ENCODE measurements at regions of chr19 and their contacts with region 1.

Region 1: DNA sequence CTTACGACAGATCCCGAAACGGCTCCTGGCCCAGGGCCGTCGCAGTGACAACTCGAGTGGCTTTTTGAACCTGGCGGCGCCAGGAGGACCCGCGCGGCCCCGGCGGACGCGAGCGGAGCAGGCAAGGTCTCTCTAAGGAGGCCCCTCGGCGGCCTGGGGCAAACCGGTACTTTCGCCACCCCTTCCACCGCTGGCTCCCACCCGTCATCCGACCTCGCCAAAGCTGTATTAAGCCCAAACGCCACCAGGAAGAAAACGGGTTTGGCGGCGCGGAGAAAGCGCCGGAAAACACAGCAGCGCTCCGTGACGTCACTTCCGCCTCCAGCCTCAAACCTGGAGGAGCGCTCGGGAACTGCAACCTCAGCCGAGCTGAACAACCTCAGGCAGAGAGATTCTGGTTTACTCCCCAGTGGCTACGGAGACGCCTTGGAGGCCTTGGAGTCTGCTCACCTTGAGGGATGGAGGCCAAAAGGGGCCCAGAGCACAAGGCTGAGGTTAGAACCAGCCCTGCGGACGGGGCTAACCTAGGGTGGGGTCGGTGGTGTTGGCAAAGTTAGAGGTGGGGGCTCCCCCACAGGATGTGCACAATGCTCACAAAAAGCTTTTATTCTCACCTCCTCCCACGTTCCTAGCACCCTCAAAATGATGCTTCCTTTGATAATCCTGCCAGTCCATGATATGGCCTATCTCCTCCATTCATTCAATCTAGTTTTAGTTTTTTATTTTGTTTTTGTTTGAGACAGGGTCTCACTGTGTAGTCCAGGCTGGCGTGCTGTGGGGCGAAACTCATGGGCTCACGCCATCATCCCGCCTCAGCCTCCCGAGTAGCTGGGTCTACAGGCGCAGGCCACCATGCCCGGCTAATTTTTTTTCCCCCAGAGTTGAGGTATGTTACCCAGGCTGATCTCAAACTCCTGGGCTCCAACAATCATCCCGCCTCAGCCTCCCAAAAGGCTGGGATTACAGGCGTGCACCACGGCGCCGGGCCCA is at the start of gene ZNF266:
- DNase-seq: peak; percentile 94
- H3K4me3 Mint-ChIP-seq: peak within 1 kb of the TSS; percentile 93
- H3K27ac Mint-ChIP-seq: peak within 1 kb of the TSS; percentile 96
- H3K4me1 Mint-ChIP-seq: peaks cover 34% of the 10 kb centered on the region
- H3K27me3 Mint-ChIP-seq: no peaks in the 10 kb centered on the region
- total RNA-seq, gene ZNF266: 31.3 to 32.1 TPM

Region 2: DNA sequence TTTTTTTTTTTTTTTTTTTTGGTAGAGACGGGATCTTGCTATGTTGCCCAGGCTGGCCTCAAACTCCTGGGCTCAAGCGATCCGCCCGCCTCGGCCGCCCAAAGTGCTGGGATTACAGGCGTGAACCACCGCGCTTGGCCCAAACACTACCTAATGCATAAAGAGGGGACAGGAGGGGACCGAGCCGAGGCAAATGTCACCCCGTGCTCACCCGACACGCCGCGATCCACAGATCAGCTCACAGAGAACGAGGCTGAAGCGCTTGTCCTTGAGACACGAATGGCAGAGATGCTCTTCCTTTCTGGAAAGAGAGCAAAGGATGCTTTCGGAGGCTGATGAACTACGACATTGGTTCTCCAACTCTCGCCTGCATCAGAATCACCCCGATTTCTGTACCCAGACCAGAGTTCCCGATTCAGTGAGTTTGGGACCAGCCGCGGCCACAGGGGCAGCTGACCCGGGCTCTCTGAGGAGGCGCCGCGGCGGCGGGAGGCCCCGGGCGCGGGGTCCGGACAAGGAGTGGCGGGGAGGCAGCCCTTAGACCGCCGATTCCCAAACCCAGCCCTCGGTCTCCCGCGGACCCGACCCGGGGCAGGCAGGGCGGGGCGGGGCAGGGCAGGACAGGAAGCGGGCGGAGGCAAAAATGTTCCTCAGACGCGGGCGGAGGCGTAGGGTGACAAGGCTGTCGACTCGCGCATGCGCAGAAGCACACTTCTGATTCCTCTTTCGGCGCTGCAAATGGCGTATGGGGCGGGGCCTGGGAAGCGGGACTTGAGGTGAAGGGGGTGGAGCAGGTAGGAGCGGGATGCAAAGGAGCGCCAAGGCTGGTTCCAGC is 126.2 kb before region 1 on chr19 and contains the start of gene ZNF699:
- CTCF ChIA-PET with region 1: interaction called, 6 read pairs
- POLR2A ChIA-PET with region 1: interaction called, 15 read pairs
- DNase-seq: peak; percentile 99
- H3K4me3 Mint-ChIP-seq: peak within 1 kb of the TSS; percentile 83
- H3K27ac Mint-ChIP-seq: peak within 1 kb of the TSS; percentile 92
- H3K4me1 Mint-ChIP-seq: peaks cover 21% of the 10 kb centered on the region
- H3K27me3 Mint-ChIP-seq: no peaks in the 10 kb centered on the region
- total RNA-seq, gene ZNF699: 10.7 to 11.7 TPM

Region 3: DNA sequence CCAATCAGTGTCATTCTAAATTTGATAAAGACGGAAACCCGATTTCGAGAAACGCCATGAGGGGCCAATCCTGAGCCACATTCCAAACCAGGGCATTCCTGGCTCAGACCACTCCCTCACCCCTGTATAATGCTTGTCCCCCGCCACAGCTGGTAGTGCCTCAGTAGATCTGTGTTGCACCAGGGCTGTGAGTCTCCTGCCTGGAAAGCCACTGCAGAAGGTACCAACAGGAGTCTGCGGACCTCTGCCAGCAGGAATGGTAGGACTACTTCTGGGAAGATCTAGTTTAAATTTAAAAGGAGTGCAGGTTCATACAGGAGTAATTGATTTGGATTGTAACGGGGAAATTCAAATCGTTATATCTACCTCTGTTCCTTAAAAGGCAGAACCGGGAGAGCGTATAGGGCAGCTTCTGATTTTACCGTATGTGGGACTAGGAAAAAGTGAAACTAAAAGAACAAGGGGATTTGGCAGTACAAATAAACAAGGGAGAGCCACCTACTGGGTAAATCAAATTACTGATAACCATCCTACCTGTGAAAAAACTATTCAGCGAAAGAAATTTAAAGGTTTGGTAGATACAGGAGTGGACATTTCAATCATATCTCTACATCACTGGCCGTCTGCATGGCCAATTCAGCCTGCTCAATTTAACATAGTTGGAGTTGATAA is 20.6 kb after region 1 on chr19:
- CTCF ChIA-PET with region 1: no interaction called
- POLR2A ChIA-PET with region 1: no interaction called
- DNase-seq: no peak
- H3K4me3 Mint-ChIP-seq: no peak overlapping the region
- H3K27ac Mint-ChIP-seq: no peak overlapping the region
- H3K4me1 Mint-ChIP-seq: no peaks in the 10 kb centered on the region
- H3K27me3 Mint-ChIP-seq: no peaks in the 10 kb centered on the region

Region 4: GRCh38 chr19:9584073-9584833 is 148.7 kb after region 1 on chr19 and contains the start of gene ZNF121:
- CTCF ChIA-PET with region 1: no interaction called
- POLR2A ChIA-PET with region 1: interaction called, 14 read pairs
- DNase-seq: peak; percentile 85
- H3K4me3 Mint-ChIP-seq: peak within 1 kb of the TSS; percentile 89
- H3K27ac Mint-ChIP-seq: peak within 1 kb of the TSS; percentile 89
- H3K4me1 Mint-ChIP-seq: peaks cover 24% of the 10 kb centered on the region
- H3K27me3 Mint-ChIP-seq: peaks cover 2% of the 10 kb centered on the region
- total RNA-seq, gene ZNF121: 40.5 to 44.6 TPM